Heart right ventricle (tissue), 16 donors: ENCODE measurements at regions of chr17 and their contacts with region 1.

Region 1: DNA sequence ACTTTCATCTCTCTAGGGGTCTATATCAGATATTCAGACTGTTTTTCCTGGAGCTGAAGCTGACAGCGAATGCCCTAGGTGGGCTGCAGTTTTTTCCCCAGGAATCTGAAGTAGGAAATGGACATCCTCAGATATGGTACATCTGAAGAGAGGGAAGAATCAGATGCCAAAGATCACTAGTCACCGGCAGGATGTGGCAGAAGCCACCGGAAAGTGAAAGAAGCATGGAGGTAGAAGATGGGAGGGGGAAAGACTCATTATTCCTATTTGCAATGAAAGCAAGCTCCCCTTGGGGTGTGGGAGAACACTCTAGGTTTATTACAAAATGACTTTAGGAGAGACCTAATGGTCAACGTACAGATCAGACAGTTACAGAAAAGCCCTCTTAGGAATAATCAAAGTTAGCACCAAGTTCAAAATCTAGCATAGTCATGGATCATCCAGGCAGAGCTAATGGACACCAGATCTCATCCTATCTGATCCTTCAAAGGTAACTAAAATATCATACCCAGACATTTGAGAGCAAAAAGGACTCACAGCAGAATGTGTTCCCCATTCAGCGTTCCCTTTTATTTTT is 110.7 kb downstream of the HS3ST3A1 start:
- DNase-seq: no peak
- ATAC-seq: no peak
- H3K4me3 ChIP-seq: no peak overlapping the region
- H3K27ac ChIP-seq: no peak overlapping the region
- H3K4me1 ChIP-seq: no peaks in the 10 kb centered on the region
- H3K27me3 ChIP-seq: no peaks in the 10 kb centered on the region
- CTCF ChIP-seq: no peak

Region 2: GRCh38 chr17:13442361-13442760 is 48.6 kb before region 1 on chr17:
- intact Hi-C with region 1: loop called in 1 of 10 experiments (anchors 1 kb)
- DNase-seq: no peak
- ATAC-seq: no peak
- H3K4me3 ChIP-seq: no peak overlapping the region
- H3K27ac ChIP-seq: no peak overlapping the region
- H3K4me1 ChIP-seq: no peaks in the 10 kb centered on the region
- H3K27me3 ChIP-seq: no peaks in the 10 kb centered on the region
- CTCF ChIP-seq: no peak

Region 3: DNA sequence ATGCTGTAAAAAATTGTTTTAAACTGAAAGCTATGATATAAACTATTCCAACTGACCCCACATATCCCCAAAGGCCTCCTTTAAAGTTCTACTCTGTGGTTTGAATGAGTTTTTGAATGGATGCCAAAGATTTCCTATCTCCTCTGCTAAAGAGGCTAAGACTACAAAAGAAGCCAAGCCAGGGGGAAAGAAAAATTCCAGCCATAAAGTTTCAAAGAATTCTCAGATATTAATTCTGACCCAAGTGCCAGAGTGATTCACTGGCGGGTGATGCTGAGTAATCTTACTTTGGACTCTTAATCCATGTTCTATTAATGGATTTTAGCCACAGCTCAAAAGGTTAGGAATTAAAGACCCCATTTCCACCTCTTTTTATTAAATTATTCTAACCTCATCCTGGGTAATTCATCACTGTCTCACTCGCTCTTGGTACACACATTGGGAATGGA is 50.1 kb after region 1 on chr17:
- intact Hi-C with region 1: no loop called
- DNase-seq: no peak
- ATAC-seq: peak in 2 of 8 donors; percentile 11 to 62
- H3K4me3 ChIP-seq: no peak overlapping the region
- H3K27ac ChIP-seq: no peak overlapping the region
- H3K4me1 ChIP-seq: peaks cover 0 to 14% (median 6%) of the 10 kb centered on the region in 9 donors
- H3K27me3 ChIP-seq: no peaks in the 10 kb centered on the region
- CTCF ChIP-seq: no peak

Region 4: GRCh38 chr17:13957636-13958035 is 466.6 kb after region 1 on chr17:
- intact Hi-C with region 1: loop called in 1 of 10 experiments (anchors 10 kb)
- DNase-seq: no peak
- ATAC-seq: no peak
- H3K4me3 ChIP-seq: no peak overlapping the region
- H3K27ac ChIP-seq: no peak overlapping the region
- H3K4me1 ChIP-seq: peaks cover 0 to 2% (median 0%) of the 10 kb centered on the region in 9 donors
- H3K27me3 ChIP-seq: no peaks in the 10 kb centered on the region
- CTCF ChIP-seq: no peak